Endothelial cell of umbilical vein (primary cell): ENCODE measurements at regions of chr5 and their contacts with region 1.

Region 1: GRCh38 chr5:45038366-45038987 is 229.7 kb downstream of the MRPS30 start:
- DNase-seq: peak; percentile 48
- H3K4me3 ChIP-seq: no peak overlapping the region
- H3K27ac ChIP-seq: no peak overlapping the region
- H3K4me1 ChIP-seq: no peaks in the 10 kb centered on the region
- H3K27me3 ChIP-seq: no peaks in the 10 kb centered on the region
- CTCF ChIP-seq: peak; percentile 34 to 64
- POLR2A ChIP-seq: no peak

Region 2: DNA sequence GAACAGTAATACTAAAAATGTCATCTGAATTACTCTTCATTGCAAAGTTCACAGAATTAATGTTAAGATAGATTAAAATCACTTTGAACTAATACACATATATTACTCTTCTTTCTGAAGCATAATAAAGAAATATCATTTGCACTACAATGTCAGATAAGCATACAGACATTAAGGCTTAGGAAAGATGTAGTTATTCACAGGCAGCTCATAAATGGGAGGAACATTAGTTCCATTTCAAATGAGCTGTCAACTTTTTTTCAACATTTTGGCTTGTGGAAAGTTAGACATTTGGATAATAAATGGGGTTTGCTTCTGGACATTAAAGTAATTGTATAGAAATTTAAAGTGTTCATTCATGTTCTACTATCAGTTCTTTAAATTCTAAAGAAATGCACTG is 655.6 kb before region 1 on chr5:
- CTCF ChIA-PET with region 1: no interaction called
- POLR2A ChIA-PET with region 1: no interaction called
- dilution Hi-C with region 1: no loop called
- intact Hi-C with region 1: no loop called
- DNase-seq: no peak
- H3K4me3 ChIP-seq: no peak overlapping the region
- H3K27ac ChIP-seq: no peak overlapping the region
- H3K4me1 ChIP-seq: no peaks in the 10 kb centered on the region
- H3K27me3 ChIP-seq: peaks cover 9 to 11% of the 10 kb centered on the region in 2 experiments
- CTCF ChIP-seq: no peak
- POLR2A ChIP-seq: no peak

Region 3: GRCh38 chr5:44862808-44863207 is 175.7 kb before region 1 on chr5:
- CTCF ChIA-PET with region 1: no interaction called
- POLR2A ChIA-PET with region 1: no interaction called
- dilution Hi-C with region 1: no loop called
- intact Hi-C with region 1: loop called (anchors 2 kb)
- DNase-seq: peak; percentile 28
- H3K4me3 ChIP-seq: no peak overlapping the region
- H3K27ac ChIP-seq: no peak overlapping the region
- H3K4me1 ChIP-seq: no peaks in the 10 kb centered on the region
- H3K27me3 ChIP-seq: no peaks in the 10 kb centered on the region
- CTCF ChIP-seq: peak in 1 of 2 donors; percentile 33
- POLR2A ChIP-seq: no peak

Region 4: DNA sequence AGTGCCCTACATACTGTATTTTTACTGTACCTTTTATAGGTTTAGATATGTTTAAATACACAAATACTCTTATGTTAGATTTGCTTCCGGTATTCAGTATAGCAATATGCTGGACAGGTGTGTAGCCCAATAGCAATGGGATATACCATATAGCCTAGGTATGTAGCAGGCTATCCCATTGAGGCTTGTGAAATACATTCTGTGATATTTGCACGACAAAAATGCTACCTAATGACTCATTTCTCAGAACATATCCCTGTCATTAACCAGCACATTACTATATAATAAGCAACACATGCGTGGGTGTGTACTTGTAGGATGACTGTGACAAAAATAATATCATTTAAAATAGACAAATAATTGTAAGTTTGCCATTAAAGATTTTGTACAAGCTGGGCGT is 20.9 kb before region 1 on chr5:
- CTCF ChIA-PET with region 1: no interaction called
- POLR2A ChIA-PET with region 1: no interaction called
- dilution Hi-C with region 1: no loop called
- intact Hi-C with region 1: no loop called
- DNase-seq: no peak
- H3K4me3 ChIP-seq: no peak overlapping the region
- H3K27ac ChIP-seq: no peak overlapping the region
- H3K4me1 ChIP-seq: no peaks in the 10 kb centered on the region
- H3K27me3 ChIP-seq: no peaks in the 10 kb centered on the region
- CTCF ChIP-seq: no peak
- POLR2A ChIP-seq: no peak

Region 5: GRCh38 chr5:45696206-45696836 is 657.8 kb after region 1 on chr5 and contains the start of gene HCN1:
- CTCF ChIA-PET with region 1: interaction called, 41 read pairs
- POLR2A ChIA-PET with region 1: no interaction called
- dilution Hi-C with region 1: no loop called
- intact Hi-C with region 1: loop called (anchors 1 kb)
- DNase-seq: peak; percentile 73
- H3K4me3 ChIP-seq: no peak within 1 kb of the TSS
- H3K27ac ChIP-seq: no peak within 1 kb of the TSS
- H3K4me1 ChIP-seq: no peaks in the 10 kb centered on the region
- H3K27me3 ChIP-seq: peaks cover 8 to 12% of the 10 kb centered on the region in 2 experiments
- CTCF ChIP-seq: peak; percentile 69 to 90
- POLR2A ChIP-seq: no peak
- total RNA-seq, gene HCN1: not detected in 2 replicates